OCI-LY7 (cell line): ENCODE measurements at regions of chr11 and their contacts with region 1.

Region 1: DNA sequence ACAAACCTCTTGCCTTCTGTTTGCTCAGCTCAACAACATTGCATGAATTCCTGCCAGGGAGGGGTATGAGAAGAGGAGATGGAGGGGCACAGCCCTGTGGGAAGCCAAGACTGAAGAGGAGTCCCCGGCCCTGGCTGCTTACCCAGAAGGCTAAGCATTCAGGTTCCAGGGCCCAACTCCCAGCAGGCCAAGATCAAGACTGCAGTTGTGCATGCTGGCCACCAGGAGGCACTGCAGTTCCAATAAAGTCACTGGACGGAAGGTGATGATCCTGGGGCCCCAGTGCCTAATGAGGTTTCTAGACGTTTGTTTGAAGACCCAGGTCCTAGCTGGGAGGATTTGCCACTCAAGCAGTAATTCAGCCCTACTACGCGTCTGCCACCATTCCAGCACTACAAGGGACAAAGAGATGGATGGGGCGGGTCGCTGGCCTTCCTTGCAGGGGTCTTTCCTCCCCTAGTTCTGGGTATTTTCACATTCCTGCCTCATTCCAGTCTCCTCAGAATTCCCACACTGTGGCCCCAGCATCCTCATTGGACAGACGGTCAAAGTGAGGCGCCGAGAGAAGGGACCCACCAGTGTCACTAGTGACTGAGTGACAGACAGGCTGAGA is 23.6 kb downstream of the ALX4 start:
- DNase-seq: peak; percentile 57
- H3K4me3 ChIP-seq: no peak overlapping the region
- H3K27ac ChIP-seq: no peak overlapping the region
- H3K4me1 ChIP-seq: no peaks in the 10 kb centered on the region
- CTCF ChIP-seq: peak; percentile 90

Region 2: GRCh38 chr11:44095506-44096394 is 190.6 kb before region 1 on chr11 and contains the start of gene EXT2:
- CTCF ChIA-PET with region 1: no interaction called
- POLR2A ChIA-PET with region 1: no interaction called
- intact Hi-C with region 1: loop called (anchors 5 kb)
- DNase-seq: peak; percentile 87
- H3K4me3 ChIP-seq: peak within 1 kb of the TSS; percentile 93
- H3K27ac ChIP-seq: no peak within 1 kb of the TSS
- H3K4me1 ChIP-seq: peaks cover 6% of the 10 kb centered on the region
- CTCF ChIP-seq: peak; percentile 82
- total RNA-seq, gene EXT2: 24.1 and 31.8 TPM in 2 replicates

Region 3: GRCh38 chr11:44351006-44351660 is 64.8 kb after region 1 on chr11:
- CTCF ChIA-PET with region 1: no interaction called
- POLR2A ChIA-PET with region 1: no interaction called
- intact Hi-C with region 1: no loop called
- DNase-seq: peak; percentile 41
- H3K4me3 ChIP-seq: no peak overlapping the region
- H3K27ac ChIP-seq: no peak overlapping the region
- H3K4me1 ChIP-seq: peaks cover 19% of the 10 kb centered on the region
- CTCF ChIP-seq: no peak

Region 4: DNA sequence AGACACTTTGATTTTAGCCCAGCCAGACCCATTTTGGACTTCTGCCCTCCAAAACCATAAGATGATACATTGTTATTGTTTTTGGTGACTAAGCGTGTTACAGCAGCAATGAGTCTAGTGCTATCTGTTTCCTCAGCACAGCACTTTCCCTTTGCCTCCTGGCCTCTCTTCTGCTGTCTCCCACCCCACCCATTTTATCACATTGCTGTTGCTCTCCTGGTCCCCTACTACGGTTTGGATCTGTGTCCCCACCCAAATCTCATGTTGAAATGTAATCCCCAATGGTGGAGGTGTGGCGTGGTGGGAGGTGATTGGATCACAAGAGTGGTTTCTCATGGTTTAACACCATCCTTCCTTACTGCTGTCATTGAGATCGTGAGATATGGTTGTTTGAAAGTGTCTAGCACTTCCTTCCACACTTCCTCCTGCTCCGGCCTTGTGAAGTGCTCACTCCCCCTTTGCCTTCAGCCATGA is 219.2 kb after region 1 on chr11:
- CTCF ChIA-PET with region 1: no interaction called
- POLR2A ChIA-PET with region 1: no interaction called
- intact Hi-C with region 1: no loop called
- DNase-seq: no peak
- H3K4me3 ChIP-seq: no peak overlapping the region
- H3K27ac ChIP-seq: no peak overlapping the region
- H3K4me1 ChIP-seq: no peaks in the 10 kb centered on the region
- CTCF ChIP-seq: no peak

Region 5: DNA sequence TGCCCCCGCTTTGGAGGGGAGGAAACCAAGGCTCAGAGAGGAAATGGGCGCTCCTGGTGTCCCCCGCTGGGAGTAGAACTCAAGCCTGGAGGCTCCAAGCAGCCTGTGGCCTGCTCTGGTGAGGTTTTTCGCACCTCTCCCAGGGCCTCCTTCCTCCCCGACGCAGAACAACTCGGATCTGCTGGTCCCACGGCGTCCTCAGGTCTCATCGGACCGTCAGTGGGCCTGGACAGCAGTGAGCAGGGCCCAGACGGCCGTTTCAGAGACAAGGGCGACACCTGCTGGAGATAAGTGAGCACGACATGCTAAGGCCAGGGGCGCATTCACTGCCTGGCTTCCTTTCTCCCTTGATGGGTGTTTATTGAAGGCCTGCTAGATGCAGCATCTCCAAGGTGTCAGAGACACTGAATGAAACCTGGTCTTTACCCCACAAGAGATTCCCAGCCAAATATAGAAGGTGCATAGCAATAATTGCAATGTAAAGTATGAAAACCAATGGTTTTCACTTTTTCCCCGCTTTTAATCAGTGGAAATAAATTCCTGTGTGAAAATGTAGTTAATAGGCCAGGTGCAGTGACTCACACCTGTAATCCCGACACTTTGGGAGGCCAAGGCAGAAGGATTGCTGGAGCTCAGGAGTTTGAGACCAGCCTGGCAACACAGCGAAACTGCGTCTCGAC is 252.1 kb after region 1 on chr11:
- CTCF ChIA-PET with region 1: no interaction called
- POLR2A ChIA-PET with region 1: interaction called, 3 read pairs
- intact Hi-C with region 1: loop called (anchors 1 kb)
- DNase-seq: peak; percentile 65
- H3K4me3 ChIP-seq: no peak overlapping the region
- H3K27ac ChIP-seq: no peak overlapping the region
- H3K4me1 ChIP-seq: no peaks in the 10 kb centered on the region
- CTCF ChIP-seq: peak; percentile 90

Region 6: DNA sequence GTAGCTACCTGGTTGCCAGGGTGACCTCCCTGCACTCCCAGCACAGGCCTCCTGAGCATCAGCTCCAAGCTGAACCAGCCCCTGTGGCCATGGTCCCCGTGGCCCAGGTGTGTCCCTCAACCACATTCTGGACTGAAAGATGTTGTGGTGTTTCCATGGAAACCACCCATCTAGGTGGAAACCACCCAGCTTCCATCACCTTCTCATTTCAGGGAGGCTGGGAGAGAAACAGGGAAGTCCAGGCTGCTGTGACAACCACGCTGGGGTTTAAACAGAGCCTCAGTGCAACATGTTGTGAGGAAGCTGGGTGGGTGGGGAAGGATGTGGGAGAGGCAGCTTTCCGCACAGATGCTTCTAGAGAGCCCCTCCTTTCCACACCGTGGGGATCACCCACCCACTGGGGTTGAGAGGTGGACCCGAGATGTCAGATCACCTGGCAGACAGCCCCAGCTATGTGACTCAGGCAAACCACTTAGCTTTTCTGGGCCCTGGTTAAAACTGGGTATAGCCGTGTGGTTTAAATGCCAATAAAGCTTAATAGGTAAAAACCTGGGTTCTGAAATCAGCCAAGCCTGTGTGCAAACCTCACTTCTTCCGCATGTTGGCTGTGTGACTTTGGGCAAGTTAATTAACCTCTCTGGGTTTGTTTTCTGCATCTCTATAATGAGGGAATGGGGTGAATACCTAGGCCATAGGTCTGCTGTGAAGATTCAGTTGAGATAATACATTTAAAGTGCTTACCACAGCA is 325.5 kb after region 1 on chr11:
- CTCF ChIA-PET with region 1: no interaction called
- POLR2A ChIA-PET with region 1: no interaction called
- intact Hi-C with region 1: loop called (anchors 10 kb)
- DNase-seq: peak; percentile 23
- H3K4me3 ChIP-seq: no peak overlapping the region
- H3K27ac ChIP-seq: no peak overlapping the region
- H3K4me1 ChIP-seq: peaks cover 51% of the 10 kb centered on the region
- CTCF ChIP-seq: no peak